Activated T-helper 1 cell treated with anti-CD3 and anti-CD28 coated beads, Interleukin-12 subunit alpha, Interleukin-12 subunit beta, Interleukin-2, Interleukin-4 antibody, amounts not matched to agents 30 ng/mL and 10 ng/mL and 1 ng/mL, durations not matched to agents 14 hours and 24 hours and 36 hours (primary cell): ENCODE measurements at regions of chr1 and their contacts with region 1.

Region 1: DNA sequence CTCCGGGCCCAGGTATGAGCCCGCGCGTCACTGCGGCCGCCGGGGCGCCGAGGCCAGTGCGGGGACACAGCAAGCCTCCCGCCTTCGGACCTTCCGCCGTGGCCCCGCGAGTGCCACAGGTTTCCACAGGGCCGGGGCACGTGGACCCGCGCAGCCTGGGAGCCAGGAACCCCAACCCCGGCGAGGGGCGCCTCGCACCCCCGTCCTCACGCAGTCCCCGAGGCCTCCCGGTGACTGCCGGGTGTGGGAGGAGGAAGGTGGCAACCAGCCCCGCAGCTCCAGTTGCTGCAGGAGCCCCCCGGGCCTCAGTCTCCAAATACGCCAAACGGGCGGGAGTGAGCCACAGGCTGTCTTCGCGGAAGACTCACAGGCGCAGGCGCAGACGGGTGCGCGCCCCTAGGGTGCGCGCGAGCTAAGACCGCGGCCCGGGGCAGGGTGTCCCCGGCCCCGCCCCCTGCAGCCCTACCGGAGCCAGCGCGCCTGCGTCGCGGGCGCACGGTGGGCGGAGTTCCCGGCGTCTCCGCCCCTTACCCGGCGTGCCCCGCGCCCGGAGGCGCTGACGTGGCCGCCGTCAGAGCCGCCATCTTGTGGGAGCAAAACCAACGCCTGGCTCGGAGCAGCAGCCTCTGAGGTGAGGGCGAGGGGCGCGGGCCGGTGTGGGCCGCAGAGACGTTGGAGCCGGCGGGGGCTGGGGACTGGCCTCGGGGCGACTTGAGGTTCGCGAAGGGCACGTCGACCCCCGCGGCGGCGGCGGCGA is at the start of gene ARF1:
- DNase-seq: peak; percentile 91
- H3K4me3 Mint-ChIP-seq: peak within 1 kb of the TSS; percentile 97
- H3K27ac Mint-ChIP-seq: peak within 1 kb of the TSS; percentile 91
- H3K4me1 Mint-ChIP-seq: peaks cover 37% of the 10 kb centered on the region
- H3K27me3 Mint-ChIP-seq: no peaks in the 10 kb centered on the region
- total RNA-seq, gene ARF1: 404 TPM in 2 replicates

Region 2: GRCh38 chr1:227542143-227543120 is 539.9 kb before region 1 on chr1:
- intact Hi-C with region 1: loop called (anchors 1 kb)
- DNase-seq: peak; percentile 87
- H3K4me3 Mint-ChIP-seq: peak overlapping the region; percentile 56
- H3K27ac Mint-ChIP-seq: peak overlapping the region; percentile 55
- H3K4me1 Mint-ChIP-seq: no peaks in the 10 kb centered on the region
- H3K27me3 Mint-ChIP-seq: no peaks in the 10 kb centered on the region

Region 3: DNA sequence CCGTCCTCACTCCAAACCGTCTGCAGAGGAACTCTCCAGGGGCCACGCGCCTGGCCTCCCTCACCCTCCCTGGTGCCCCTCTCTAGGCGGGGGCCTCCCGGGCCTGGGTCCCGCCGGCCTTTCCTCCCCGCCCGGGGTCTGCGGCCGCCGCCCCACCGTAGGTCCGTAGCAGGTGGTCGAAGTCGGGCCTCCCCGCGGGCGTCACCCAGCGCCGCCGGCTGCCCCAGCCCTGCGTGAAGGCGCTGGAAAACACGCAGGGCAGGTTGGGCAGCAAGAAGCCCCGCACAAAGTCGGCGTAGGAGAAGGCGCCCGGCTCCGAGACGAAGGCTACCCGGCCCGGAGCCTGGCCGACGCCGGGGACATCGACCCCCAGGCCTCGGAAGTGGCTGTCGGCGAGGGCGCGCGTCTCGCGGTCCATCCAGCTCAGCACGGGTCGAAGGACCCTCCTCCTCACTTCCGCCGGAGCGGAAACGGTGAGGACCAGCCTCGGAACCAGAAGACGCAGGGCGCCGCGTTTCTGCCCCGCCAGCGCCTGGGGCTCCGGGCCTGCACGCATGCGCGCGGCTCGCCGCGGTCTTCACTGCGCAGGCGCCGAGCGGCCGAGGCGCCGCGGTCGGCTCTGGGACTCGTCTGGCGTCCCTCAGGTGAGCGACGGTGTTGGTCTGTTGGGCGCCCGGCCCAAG is 347.3 kb before region 1 on chr1 and contains the starts of genes JMJD4 and SNAP47:
- intact Hi-C with region 1: loop called (anchors 1 kb)
- DNase-seq: peak; percentile 93
- H3K4me3 Mint-ChIP-seq: peak within 1 kb of the TSS; percentile 98
- H3K27ac Mint-ChIP-seq: peak within 1 kb of the TSS; percentile 97
- H3K4me1 Mint-ChIP-seq: peaks cover 25% of the 10 kb centered on the region
- H3K27me3 Mint-ChIP-seq: no peaks in the 10 kb centered on the region
- total RNA-seq, gene JMJD4: 33.9 and 37.5 TPM in 2 replicates
- total RNA-seq, gene SNAP47: 32.2 and 33.7 TPM in 2 replicates

Region 4: DNA sequence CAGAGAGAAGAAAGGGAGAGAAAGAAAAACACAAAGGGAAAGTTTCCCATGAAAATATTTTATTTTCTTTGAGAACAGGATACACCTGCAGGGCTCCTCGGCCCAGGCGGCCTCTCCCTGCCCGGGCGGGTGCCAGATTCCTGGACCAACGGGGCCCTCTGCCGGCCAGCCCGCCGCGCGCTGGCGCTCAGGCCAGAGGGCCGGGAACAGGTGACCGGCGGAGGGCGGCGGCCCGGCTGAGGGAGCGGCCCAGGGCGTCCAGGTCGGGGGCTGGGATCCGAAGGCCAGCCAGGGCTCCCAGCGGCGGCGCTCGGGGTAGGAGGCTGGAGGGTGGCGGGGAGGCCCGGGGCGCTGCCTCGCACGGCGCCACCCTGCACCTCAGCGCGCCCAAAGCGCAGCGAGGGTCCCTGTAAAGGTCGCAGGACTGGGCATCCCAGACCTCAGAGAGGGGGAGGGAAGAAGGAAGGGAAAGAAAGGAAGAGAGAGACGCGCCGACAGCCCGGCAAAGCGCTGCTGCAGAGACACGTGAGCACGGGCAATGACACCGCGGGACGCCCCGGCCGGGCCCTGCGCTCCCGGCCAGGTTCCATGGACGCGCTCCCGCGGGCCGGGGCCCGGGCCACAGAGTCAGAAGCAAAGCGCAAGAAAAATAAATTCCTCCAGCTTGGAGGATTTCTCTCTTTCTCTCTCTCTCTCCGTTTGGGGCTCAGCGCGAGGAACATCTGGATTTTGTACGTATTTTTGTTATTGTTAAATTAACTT is 135.5 kb before region 1 on chr1:
- intact Hi-C with region 1: no loop called
- DNase-seq: peak; percentile 31
- H3K4me3 Mint-ChIP-seq: peak overlapping the region; percentile 68
- H3K27ac Mint-ChIP-seq: no peak overlapping the region
- H3K4me1 Mint-ChIP-seq: no peaks in the 10 kb centered on the region
- H3K27me3 Mint-ChIP-seq: peaks cover 36% of the 10 kb centered on the region

Region 5: DNA sequence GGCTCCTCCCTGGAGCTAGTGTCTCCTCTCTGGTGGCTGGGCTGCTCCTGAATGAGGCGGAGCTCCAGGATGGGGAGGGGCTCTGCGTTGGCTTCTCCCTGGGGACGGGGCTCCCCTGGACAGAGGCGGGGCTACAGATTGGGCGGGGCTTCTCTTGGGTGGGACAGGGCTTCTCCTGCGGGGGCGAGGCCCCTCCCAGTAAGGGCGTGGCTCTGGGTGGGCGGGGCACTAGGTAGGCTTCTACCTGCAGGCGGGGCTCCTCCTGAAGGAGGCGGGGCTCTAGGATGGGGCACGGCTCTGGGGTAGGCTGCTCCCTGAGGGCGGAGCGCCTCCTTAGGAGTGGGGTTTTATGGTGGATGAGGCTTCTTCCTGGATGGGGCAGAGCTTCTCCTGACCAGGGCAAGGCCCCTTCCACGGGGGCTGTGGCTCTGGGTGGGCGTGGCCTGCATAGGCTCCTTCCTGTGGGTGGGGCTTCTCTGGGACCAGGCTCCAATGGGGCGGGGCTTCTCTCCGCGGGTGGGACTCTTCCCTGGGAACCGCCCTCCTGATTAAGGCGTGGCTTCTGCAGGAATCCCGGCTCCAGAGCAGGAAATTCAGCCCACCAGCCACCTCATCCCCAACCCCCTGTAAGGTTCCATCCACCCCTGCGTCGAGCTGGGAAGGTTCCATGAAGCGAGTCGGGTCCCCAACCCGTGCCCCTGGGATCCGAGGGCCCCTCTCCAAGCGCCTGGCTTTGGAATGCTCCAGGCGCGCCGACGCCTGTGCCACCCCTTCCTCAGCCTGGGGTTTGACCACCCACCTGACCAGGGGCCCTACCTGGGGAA is 22.5 kb before region 1 on chr1:
- intact Hi-C with region 1: loop called (anchors 1 kb)
- DNase-seq: peak; percentile 58
- H3K4me3 Mint-ChIP-seq: peak overlapping the region; percentile 68
- H3K27ac Mint-ChIP-seq: no peak overlapping the region
- H3K4me1 Mint-ChIP-seq: no peaks in the 10 kb centered on the region
- H3K27me3 Mint-ChIP-seq: peaks cover 43% of the 10 kb centered on the region

Region 6: GRCh38 chr1:228102791-228103620 is 20.7 kb after region 1 on chr1 and contains the start of gene C1orf35:
- intact Hi-C with region 1: loop called (anchors 1 kb)
- DNase-seq: peak; percentile 96
- H3K4me3 Mint-ChIP-seq: peak within 1 kb of the TSS; percentile 92
- H3K27ac Mint-ChIP-seq: peak within 1 kb of the TSS; percentile 93
- H3K4me1 Mint-ChIP-seq: peaks cover 25% of the 10 kb centered on the region
- H3K27me3 Mint-ChIP-seq: no peaks in the 10 kb centered on the region
- total RNA-seq, gene C1orf35: 27.7 and 30.7 TPM in 2 replicates

Region 7: GRCh38 chr1:228139944-228140656 is 57.8 kb after region 1 on chr1 and contains the start of gene GUK1:
- intact Hi-C with region 1: loop called (anchors 1 kb)
- DNase-seq: peak; percentile 100
- H3K4me3 Mint-ChIP-seq: peak within 1 kb of the TSS; percentile 100
- H3K27ac Mint-ChIP-seq: peak within 1 kb of the TSS; percentile 97
- H3K4me1 Mint-ChIP-seq: peaks cover 22% of the 10 kb centered on the region
- H3K27me3 Mint-ChIP-seq: peaks cover 21% of the 10 kb centered on the region
- total RNA-seq, gene GUK1: 201 and 202 TPM in 2 replicates

Region 8: GRCh38 chr1:228486596-228487335 is 404.5 kb after region 1 on chr1:
- intact Hi-C with region 1: loop called (anchors 1 kb)
- DNase-seq: peak; percentile 84
- H3K4me3 Mint-ChIP-seq: peak overlapping the region; percentile 97
- H3K27ac Mint-ChIP-seq: peak overlapping the region; percentile 99
- H3K4me1 Mint-ChIP-seq: peaks cover 29% of the 10 kb centered on the region
- H3K27me3 Mint-ChIP-seq: peaks cover 7% of the 10 kb centered on the region